OCI-LY7 (cell line): ENCODE measurements at regions of chr10 and their contacts with region 1.

Region 1: GRCh38 chr10:112524641-112525040 is 77.6 kb downstream of the VTI1A start:
- DNase-seq: no peak
- H3K4me3 ChIP-seq: no peak overlapping the region
- H3K27ac ChIP-seq: no peak overlapping the region
- H3K4me1 ChIP-seq: no peaks in the 10 kb centered on the region
- CTCF ChIP-seq: no peak

Region 2: DNA sequence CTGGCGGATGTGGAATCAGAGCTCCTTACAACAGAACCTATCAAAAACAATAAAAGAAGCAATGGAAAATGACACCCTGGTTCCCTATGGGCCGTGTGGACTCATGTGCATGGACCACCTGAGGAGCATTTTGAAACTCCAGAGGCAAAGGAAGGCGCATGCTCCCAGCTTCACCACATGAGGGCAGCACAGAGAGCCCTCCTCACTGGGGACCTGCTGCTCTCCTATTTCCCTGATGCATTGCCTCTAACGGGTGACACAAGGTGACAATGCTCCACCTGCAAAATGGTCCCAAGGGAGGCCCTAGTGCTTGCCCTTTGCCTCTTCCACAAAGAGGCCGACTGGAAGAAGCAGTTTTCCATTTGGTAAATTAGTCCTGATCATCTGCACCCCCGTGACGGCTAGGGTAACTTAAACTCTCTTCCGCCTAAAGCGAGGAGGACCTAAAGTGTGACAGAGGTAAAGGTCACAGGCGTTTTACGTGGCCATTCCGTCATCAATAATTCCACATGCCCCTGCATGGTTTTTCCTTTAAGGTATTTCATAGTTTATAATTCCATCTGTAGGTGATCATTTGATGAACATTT is 408.7 kb before region 1 on chr10:
- CTCF ChIA-PET with region 1: no interaction called
- POLR2A ChIA-PET with region 1: no interaction called
- intact Hi-C with region 1: no loop called
- DNase-seq: peak; percentile 53
- H3K4me3 ChIP-seq: no peak overlapping the region
- H3K27ac ChIP-seq: no peak overlapping the region
- H3K4me1 ChIP-seq: no peaks in the 10 kb centered on the region
- CTCF ChIP-seq: peak; percentile 83

Region 3: GRCh38 chr10:112235920-112236319 is 288.7 kb before region 1 on chr10:
- CTCF ChIA-PET with region 1: no interaction called
- POLR2A ChIA-PET with region 1: no interaction called
- intact Hi-C with region 1: no loop called
- DNase-seq: no peak
- H3K4me3 ChIP-seq: no peak overlapping the region
- H3K27ac ChIP-seq: no peak overlapping the region
- H3K4me1 ChIP-seq: no peaks in the 10 kb centered on the region
- CTCF ChIP-seq: no peak

Region 4: DNA sequence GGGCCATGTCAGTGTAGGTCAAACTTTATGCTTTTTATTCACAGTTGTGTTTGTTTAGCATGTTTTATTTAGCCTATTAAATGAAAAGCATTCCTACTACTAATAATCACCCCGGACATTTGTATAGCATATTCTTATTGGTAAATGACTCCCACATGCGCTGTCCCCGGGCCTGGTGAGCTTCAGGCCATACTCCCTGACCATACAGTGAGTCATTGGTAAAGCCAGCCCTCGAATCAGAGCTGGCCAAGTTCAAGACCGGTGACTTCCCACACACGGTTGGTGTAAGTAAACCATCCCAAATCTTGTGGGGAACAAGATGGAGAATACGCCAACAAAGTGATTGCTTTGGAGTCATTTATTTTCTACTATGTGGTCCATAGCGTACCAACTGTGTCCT is 186.7 kb after region 1 on chr10:
- CTCF ChIA-PET with region 1: no interaction called
- POLR2A ChIA-PET with region 1: no interaction called
- intact Hi-C with region 1: no loop called
- DNase-seq: no peak
- H3K4me3 ChIP-seq: no peak overlapping the region
- H3K27ac ChIP-seq: no peak overlapping the region
- H3K4me1 ChIP-seq: no peaks in the 10 kb centered on the region
- CTCF ChIP-seq: no peak

Region 5: DNA sequence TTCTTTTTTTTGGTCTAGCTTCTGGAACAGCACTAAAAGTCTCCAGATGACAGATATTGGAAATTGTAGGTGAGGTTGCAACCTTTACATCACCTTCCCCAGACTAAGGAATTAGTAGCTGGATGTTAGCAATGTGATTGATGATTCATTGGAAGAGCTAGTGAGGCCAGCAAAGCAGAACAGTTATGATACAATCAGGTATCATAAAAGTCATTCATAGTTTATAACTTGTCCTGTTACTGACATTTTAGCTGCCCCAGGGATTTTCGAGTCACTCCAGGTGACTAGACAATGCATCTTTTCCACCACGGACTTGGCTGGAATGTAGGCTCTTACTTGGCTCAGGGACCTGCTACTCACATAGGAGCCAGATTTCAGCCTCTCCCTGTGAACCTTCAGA is 409.6 kb after region 1 on chr10:
- CTCF ChIA-PET with region 1: no interaction called
- POLR2A ChIA-PET with region 1: no interaction called
- intact Hi-C with region 1: loop called (anchors 5 kb)
- DNase-seq: no peak
- H3K4me3 ChIP-seq: no peak overlapping the region
- H3K27ac ChIP-seq: no peak overlapping the region
- H3K4me1 ChIP-seq: no peaks in the 10 kb centered on the region
- CTCF ChIP-seq: no peak